Mammary epithelial cell (primary cell): ENCODE measurements at regions of chr1 and their contacts with region 1.

Region 1: DNA sequence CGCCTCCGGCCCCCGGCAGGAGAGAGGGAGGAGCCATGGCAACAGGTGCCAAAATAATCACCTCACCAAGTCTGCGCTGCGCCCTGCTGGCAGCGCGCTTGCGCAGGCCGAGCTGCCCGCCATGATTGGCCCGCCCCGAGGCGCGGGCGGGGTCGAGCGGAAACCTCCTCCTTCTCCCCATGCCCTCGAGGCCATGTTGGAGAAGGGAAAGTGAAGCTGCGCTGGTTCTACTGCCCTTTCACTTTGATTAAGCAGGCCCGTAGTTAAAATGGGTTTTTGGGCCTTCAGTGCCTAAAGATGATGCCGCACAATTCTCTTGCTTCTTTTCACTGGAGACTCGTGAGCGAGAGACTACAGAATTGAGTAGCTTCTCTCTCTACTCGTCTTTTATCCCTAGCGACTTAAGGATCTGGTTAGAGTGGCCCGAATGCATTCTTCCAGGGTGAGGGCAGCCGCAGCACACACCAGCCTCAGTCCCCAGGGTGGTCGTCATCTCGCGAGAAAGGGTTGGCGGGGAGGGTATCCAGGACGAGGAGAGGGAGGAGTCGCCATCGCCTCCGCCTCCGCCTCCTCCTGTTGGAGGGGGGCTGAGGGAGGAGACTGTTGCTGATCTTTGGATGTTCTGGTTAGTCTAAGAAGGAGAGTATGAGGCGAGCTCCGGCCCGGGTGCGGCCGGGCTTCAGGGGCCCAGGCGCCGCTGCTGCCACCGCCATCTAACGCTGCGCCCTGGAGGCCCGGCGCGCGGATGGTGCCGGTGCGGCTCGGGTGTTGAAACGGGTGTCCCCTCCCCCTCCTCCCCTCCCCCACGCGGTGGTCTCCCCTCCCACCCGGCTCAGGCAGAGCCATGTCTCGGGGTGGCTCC is at the start of gene DCAF6:
- DNase-seq: peak; percentile 99
- H3K4me3 ChIP-seq: peak within 1 kb of the TSS; percentile 47 to 94 (median 93)
- H3K27ac ChIP-seq: peak within 1 kb of the TSS; percentile 91
- H3K4me1 ChIP-seq: no peaks in the 10 kb centered on the region
- H3K27me3 ChIP-seq: no peaks in the 10 kb centered on the region
- CTCF ChIP-seq: no peak
- total RNA-seq, gene DCAF6: 53.1 to 76.7 TPM

Region 2: DNA sequence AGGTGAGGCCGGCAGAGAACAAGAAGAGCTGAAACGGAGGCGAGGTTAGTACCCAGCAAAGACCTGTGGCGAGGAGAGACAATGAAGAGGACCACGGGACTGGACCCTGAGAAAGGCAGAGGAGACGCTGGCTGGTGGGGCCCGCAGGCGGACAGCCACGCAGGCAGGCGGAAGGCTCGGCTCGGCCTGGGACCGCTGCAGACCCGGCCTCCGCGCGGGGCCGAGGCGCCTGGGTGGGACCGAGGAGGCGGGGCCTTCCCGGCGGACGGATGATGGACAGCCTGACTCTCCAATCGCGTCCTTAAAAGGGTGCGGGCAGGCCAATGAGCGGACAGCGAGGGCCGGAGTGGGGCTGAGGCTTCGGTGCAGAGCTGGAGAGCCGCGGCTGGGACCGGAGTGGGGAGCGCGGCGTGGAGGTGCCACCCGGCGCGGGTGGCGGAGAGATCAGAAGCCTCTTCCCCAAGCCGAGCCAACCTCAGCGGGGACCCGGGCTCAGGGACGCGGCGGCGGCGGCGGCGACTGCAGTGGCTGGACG is 214.6 kb before region 1 on chr1 and contains the start of gene MPZL1:
- CTCF ChIA-PET with region 1: no interaction called
- dilution Hi-C with region 1: no loop called
- in situ Hi-C with region 1: loop called in 1 of 2 experiments (anchors 25 kb)
- intact Hi-C with region 1: loop called (anchors 2 kb)
- DNase-seq: peak; percentile 91
- H3K4me3 ChIP-seq: peak within 1 kb of the TSS; percentile 88 to 98 (median 94)
- H3K27ac ChIP-seq: peak within 1 kb of the TSS; percentile 66
- H3K4me1 ChIP-seq: peaks cover 42% of the 10 kb centered on the region
- H3K27me3 ChIP-seq: no peaks in the 10 kb centered on the region
- CTCF ChIP-seq: no peak
- total RNA-seq, gene MPZL1: 148 to 227 TPM

Region 3: DNA sequence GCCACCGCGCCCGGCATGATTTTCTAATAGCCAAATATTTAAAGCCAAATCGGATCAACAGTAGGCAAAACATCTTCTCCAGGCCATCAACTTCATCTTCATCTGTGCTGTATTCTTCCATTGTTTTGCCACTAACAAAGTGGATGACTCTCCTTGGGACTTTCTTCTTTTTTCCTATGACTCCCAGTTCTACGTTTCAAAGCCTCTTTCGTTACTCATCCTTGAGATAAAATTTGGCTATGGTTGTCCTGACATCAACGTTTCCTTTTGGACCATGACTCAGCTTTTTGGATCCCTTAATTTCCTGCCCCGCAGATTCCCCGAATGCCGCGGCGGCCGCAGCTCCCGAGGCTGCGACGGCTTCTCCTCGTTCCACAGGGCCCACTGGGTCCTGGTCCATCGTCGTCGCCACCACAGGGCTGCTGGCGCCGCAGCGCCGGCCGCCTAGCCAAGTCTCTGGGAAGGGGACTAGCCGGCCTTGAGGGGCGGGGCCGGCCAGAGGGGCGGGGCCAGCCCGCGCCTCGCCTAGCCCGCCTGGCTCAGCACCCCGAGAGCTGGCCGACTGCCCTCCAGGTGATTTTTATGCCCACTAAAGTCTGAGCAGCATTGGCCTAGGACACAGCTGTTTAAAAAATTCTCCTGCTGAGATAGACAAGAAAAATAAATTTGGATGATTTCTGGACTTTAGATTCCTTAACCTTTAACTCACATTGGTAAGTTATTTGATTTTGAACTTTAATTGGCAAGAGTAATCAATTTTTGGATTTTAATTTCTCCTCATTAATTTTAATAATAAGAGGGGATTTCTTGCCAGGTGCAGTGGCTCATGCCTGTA is 116.2 kb before region 1 on chr1:
- CTCF ChIA-PET with region 1: no interaction called
- dilution Hi-C with region 1: no loop called
- in situ Hi-C with region 1: no loop called
- intact Hi-C with region 1: loop called (anchors 5 kb)
- DNase-seq: peak; percentile 94
- H3K4me3 ChIP-seq: peak overlapping the region; percentile 36 to 43 (median 40)
- H3K27ac ChIP-seq: peak overlapping the region; percentile 94
- H3K4me1 ChIP-seq: peaks cover 31% of the 10 kb centered on the region
- H3K27me3 ChIP-seq: no peaks in the 10 kb centered on the region
- CTCF ChIP-seq: no peak

Region 4: DNA sequence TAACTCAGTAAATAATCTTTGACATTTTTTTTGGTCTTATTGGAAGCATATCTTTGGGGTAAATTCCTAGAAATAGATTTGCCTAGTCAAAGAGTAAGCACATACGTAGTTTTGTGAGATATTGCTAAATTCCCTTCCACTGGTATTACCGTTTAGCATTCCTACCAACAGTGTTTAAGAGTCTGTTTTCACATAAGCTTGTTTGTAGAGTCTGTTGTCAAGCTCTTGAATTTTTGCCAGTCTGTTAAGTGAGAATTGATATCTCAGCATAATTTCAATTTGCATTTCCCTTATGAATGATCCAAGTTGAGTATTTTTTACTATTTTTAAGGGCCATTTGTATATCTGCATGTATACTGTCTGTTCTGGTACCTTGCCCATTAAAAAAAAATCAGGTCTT is 37.5 kb after region 1 on chr1:
- CTCF ChIA-PET with region 1: no interaction called
- dilution Hi-C with region 1: no loop called
- in situ Hi-C with region 1: no loop called
- intact Hi-C with region 1: no loop called
- DNase-seq: no peak
- H3K4me3 ChIP-seq: no peak overlapping the region
- H3K27ac ChIP-seq: no peak overlapping the region
- H3K4me1 ChIP-seq: no peaks in the 10 kb centered on the region
- H3K27me3 ChIP-seq: no peaks in the 10 kb centered on the region
- CTCF ChIP-seq: no peak

Region 5: DNA sequence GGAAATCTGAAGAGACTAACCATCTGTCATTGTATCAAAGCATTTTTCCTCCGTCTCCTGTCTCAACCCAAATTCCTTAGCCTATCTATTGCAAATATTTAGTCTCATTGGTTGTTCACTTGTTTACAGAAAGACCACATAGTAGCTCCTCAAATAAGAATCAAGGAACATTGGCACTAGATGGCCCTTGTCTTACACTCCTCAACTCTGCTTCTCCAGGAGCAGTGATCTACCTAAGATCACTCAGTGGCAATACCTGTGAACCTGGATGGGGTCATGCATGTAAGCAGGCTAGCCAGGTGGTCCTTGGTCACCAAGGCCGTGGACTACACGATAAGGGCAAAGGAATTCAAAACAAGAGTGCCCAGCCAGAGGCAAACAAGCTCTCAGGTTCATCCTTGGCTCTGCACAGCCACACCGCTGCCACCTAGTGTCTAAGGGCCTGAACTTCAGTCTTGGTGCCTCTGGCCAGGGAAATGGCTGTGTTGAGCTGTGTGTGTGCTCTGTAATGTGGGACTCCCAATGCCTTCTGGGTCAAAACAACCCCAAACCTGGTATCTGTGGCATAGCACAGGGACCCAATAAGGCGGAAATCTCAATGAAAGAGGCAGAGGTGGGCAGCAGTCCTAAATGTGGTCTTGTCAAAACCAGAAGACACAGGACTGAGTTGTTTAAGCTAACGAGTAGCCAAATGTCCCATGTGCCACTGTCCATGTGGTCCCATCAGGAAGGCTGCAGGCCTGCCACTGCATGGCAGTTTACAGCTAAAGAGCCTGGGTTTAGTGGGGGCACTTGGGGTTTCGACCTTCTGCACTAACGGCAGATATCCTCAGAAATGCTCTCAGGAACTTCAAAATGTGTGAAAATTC is 145.9 kb after region 1 on chr1:
- CTCF ChIA-PET with region 1: no interaction called
- dilution Hi-C with region 1: no loop called
- in situ Hi-C with region 1: no loop called
- intact Hi-C with region 1: loop called (anchors 10 kb)
- DNase-seq: peak; percentile 64
- H3K4me3 ChIP-seq: no peak overlapping the region
- H3K27ac ChIP-seq: no peak overlapping the region
- H3K4me1 ChIP-seq: peaks cover 28% of the 10 kb centered on the region
- H3K27me3 ChIP-seq: no peaks in the 10 kb centered on the region
- CTCF ChIP-seq: peak; percentile 95 to 97

Region 6: GRCh38 chr1:168225476-168226190 is 289.3 kb after region 1 on chr1 and contains the start of gene SFT2D2:
- CTCF ChIA-PET with region 1: no interaction called
- dilution Hi-C with region 1: no loop called
- in situ Hi-C with region 1: no loop called
- intact Hi-C with region 1: loop called (anchors 5 kb)
- DNase-seq: peak; percentile 82
- H3K4me3 ChIP-seq: peak within 1 kb of the TSS; percentile 75 to 88 (median 82)
- H3K27ac ChIP-seq: peak within 1 kb of the TSS; percentile 78
- H3K4me1 ChIP-seq: peaks cover 30% of the 10 kb centered on the region
- H3K27me3 ChIP-seq: no peaks in the 10 kb centered on the region
- CTCF ChIP-seq: no peak
- total RNA-seq, gene SFT2D2: 47.3 to 56.6 TPM